HepG2 (cell line): ENCODE measurements at regions of chr12 and their contacts with region 1.

Region 1: DNA sequence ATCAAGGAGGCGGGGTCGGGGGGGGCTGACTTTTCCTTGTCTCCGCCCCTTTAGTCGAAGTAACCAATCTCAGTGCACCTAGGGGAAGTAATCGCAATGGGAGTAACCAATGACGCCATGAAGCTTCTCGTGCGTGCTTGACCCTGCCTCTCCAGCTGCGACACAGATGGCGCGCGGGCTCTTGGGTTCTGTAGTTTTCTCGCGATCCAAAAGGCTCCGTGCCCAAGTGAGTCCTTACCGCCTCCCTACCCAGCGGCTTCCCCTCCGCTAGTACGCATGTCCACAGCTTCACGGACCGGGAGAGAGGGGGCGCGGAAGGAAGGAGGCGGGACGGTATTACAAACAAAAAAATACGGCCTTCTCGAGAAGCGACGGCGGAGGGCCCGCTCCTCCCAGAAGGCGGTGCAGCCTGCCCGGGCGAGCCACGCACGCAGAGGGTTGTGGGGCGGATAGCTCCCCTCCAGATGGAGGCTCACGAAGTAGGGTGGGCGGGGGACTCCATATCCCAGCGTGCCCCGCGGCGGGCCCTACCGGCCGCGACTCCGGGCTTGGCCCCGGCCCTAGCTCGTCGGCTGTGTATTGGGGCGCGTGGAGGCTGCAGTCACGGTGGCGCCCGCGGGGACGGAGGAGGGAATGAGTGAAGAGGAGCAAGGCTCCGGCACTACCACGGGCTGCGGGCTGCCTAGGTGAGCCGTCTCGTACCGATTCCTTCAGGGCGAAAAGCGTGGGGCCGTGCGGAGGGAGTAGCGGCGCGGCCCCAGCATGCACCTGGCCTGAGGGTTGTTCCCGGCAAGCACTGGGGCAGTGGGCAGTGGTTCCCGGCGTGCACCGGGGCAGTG is at the start of gene TARBP2:
- DNase-seq: peak; percentile 99
- ATAC-seq: peak; percentile 83
- H3K4me3 ChIP-seq: peak within 1 kb of the TSS; percentile 69 to 78 (median 76)
- H3K27ac ChIP-seq: peak within 1 kb of the TSS; percentile 88
- H3K4me1 ChIP-seq: peaks cover 48% of the 10 kb centered on the region
- H3K27me3 ChIP-seq: no peaks in the 10 kb centered on the region; a peak in 1 of 5 replicates
- CTCF ChIP-seq: peak; percentile 11; the same call in 1 of the 2 replicates
- EP300 ChIP-seq: 0 out of 4 replicates have a peak, but pooled peaks of 1 of the 2 experiments have one; percentile 5
- POLR2A ChIP-seq: peak; percentile 78 to 86
- RAD21 ChIP-seq: peak; percentile 38; the same call in 1 of the 2 replicates
- total RNA-seq, gene TARBP2: 39.5 and 55.5 TPM in 2 replicates

Region 2: GRCh38 chr12:53295070-53295890 is 205.7 kb before region 1 on chr12 and contains the start of gene PFDN5:
- CTCF ChIA-PET with region 1: no interaction called
- POLR2A ChIA-PET with region 1: interaction called, 18 read pairs
- in situ Hi-C with region 1: no loop called
- intact Hi-C with region 1: no loop called
- DNase-seq: peak; percentile 84
- ATAC-seq: peak; percentile 90
- H3K4me3 ChIP-seq: peak within 1 kb of the TSS; percentile 90 to 98 (median 96)
- H3K27ac ChIP-seq: peak within 1 kb of the TSS; percentile 74
- H3K4me1 ChIP-seq: peaks cover 40% of the 10 kb centered on the region
- H3K27me3 ChIP-seq: peaks cover 0 to 4% of the 10 kb centered on the region in 2 experiments; a peak in 1 of 5 replicates
- CTCF ChIP-seq: no peak; the same call in 1 of the 2 replicates
- EP300 ChIP-seq: 0 out of 4 replicates have a peak, but pooled peaks of 1 of the 2 experiments have one; percentile 7
- POLR2A ChIP-seq: peak; percentile 84 to 88
- RAD21 ChIP-seq: no peak
- total RNA-seq, gene PFDN5: 462 and 578 TPM in 2 replicates

Region 3: GRCh38 chr12:53379389-53380103 is 121.4 kb before region 1 on chr12:
- CTCF ChIA-PET with region 1: no interaction called
- POLR2A ChIA-PET with region 1: interaction called, 24 read pairs
- in situ Hi-C with region 1: no loop called
- intact Hi-C with region 1: no loop called
- DNase-seq: peak; percentile 100
- ATAC-seq: peak; percentile 94
- H3K4me3 ChIP-seq: peak overlapping the region in 2 of 3 experiments; percentile 73 to 87; a peak in 2 of 6 replicates
- H3K27ac ChIP-seq: peak overlapping the region; percentile 79
- H3K4me1 ChIP-seq: peaks cover 47% of the 10 kb centered on the region
- H3K27me3 ChIP-seq: no peaks in the 10 kb centered on the region; a peak in 1 of 5 replicates
- CTCF ChIP-seq: no peak
- EP300 ChIP-seq: no peak
- POLR2A ChIP-seq: peak in 1 of 2 experiments; percentile 45; a peak in 2 of 4 replicates
- RAD21 ChIP-seq: no peak

Region 4: DNA sequence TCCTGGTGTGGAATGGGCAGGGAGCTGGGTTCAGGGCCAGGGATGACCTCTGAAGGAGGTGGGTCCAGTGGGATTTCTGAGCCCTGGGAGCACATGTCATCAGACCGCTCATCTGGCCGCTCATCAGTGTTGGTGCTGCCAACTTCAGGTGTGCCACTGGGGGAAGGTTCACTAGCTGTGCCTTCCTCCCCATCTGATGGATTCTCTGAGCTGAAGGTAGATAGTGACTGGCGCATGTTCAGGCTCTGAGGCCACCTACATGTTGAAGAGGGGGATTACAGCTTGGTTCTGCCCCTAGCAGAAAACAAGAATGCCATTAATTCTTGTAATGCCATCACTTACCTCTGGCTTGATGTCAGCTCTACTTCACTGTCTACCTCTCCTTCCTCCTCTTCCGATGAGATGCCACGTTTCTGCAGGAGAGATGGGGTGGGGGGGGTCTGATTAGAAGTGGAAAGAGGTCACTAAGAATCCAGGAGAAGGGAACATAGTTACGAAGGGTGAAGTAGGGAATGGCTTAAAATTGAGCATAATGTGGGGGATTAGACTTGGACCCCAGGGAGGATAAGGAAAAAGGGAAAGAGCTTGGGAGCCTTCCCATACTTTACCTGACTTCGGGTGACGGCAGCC is 18.9 kb before region 1 on chr12:
- CTCF ChIA-PET with region 1: no interaction called
- POLR2A ChIA-PET with region 1: interaction called, 58 read pairs
- in situ Hi-C with region 1: no loop called
- intact Hi-C with region 1: no loop called
- DNase-seq: peak; percentile 49
- ATAC-seq: peak; percentile 43
- H3K4me3 ChIP-seq: no peak overlapping the region
- H3K27ac ChIP-seq: no peak overlapping the region
- H3K4me1 ChIP-seq: no peaks in the 10 kb centered on the region
- H3K27me3 ChIP-seq: no peaks in the 10 kb centered on the region
- CTCF ChIP-seq: no peak; the same call in 1 of the 2 replicates
- EP300 ChIP-seq: no peak
- POLR2A ChIP-seq: peak in 1 of 2 experiments; percentile 47; a peak in 2 of 4 replicates
- RAD21 ChIP-seq: no peak

Region 5: GRCh38 chr12:53538196-53538689 is 37.2 kb after region 1 on chr12:
- CTCF ChIA-PET with region 1: no interaction called
- POLR2A ChIA-PET with region 1: interaction called, 16 read pairs
- in situ Hi-C with region 1: no loop called
- intact Hi-C with region 1: no loop called
- DNase-seq: peak; percentile 94
- ATAC-seq: peak; percentile 96
- H3K4me3 ChIP-seq: no peak overlapping the region; a peak in 1 of 6 replicates
- H3K27ac ChIP-seq: peak overlapping the region; percentile 76
- H3K4me1 ChIP-seq: peaks cover 31% of the 10 kb centered on the region
- H3K27me3 ChIP-seq: no peaks in the 10 kb centered on the region
- CTCF ChIP-seq: no peak
- EP300 ChIP-seq: peak; percentile 50 to 83; a peak in 3 of 4 replicates
- POLR2A ChIP-seq: no peak
- RAD21 ChIP-seq: no peak

Region 6: GRCh38 chr12:53551889-53552291 is 50.9 kb after region 1 on chr12:
- CTCF ChIA-PET with region 1: no interaction called
- POLR2A ChIA-PET with region 1: no interaction called
- in situ Hi-C with region 1: no loop called
- intact Hi-C with region 1: no loop called
- DNase-seq: no peak
- ATAC-seq: no peak
- H3K4me3 ChIP-seq: no peak overlapping the region
- H3K27ac ChIP-seq: no peak overlapping the region
- H3K4me1 ChIP-seq: no peaks in the 10 kb centered on the region
- H3K27me3 ChIP-seq: no peaks in the 10 kb centered on the region
- CTCF ChIP-seq: no peak
- EP300 ChIP-seq: no peak
- POLR2A ChIP-seq: no peak
- RAD21 ChIP-seq: no peak

Region 7: DNA sequence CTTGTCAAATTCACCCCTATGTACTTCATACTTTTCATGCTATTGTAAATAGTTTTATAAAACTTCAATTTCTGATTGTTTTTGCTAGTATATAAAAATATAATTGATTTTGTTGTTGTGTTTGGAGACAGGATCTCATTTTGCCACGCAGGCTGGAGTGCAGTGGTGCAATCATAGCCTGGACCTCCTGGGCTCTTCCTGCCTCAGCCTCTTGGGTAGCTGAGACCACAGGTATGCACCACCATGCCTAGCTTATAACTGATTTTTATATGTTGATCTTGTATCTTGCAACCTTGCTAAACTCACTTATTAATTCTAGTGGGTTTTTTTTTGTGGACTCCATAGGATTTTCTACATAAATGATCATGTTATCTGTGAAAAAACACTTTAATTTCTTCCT is 151.4 kb after region 1 on chr12:
- CTCF ChIA-PET with region 1: no interaction called
- POLR2A ChIA-PET with region 1: no interaction called
- in situ Hi-C with region 1: no loop called
- intact Hi-C with region 1: no loop called
- DNase-seq: no peak
- ATAC-seq: peak; percentile 46; the same call in 1 of the 3 replicates
- H3K4me3 ChIP-seq: no peak overlapping the region
- H3K27ac ChIP-seq: no peak overlapping the region
- H3K4me1 ChIP-seq: peaks cover 33% of the 10 kb centered on the region
- H3K27me3 ChIP-seq: no peaks in the 10 kb centered on the region
- CTCF ChIP-seq: no peak
- EP300 ChIP-seq: no peak
- POLR2A ChIP-seq: no peak
- RAD21 ChIP-seq: no peak